PC-3 (cell line): ENCODE measurements at regions of chr3 and their contacts with region 1.

Region 1: GRCh38 chr3:146469150-146470017 is at the start of gene PLSCR2:
- DNase-seq: peak; percentile 69
- ATAC-seq: peak; percentile 70
- H3K4me3 ChIP-seq: peak within 1 kb of the TSS; percentile 61
- H3K27ac ChIP-seq: peak within 1 kb of the TSS; percentile 93
- H3K4me1 ChIP-seq: peaks cover 54% of the 10 kb centered on the region
- H3K27me3 ChIP-seq: no peaks in the 10 kb centered on the region
- CTCF ChIP-seq: no peak
- total RNA-seq, gene PLSCR2: 0.86 TPM in 1 of 2 replicates, not detected in the other

Region 2: GRCh38 chr3:145251311-145251710 is 1218.1 kb before region 1 on chr3:
- CTCF ChIA-PET with region 1: no interaction called
- POLR2A ChIA-PET with region 1: no interaction called
- intact Hi-C with region 1: no loop called
- DNase-seq: no peak
- ATAC-seq: no peak
- H3K4me3 ChIP-seq: no peak overlapping the region
- H3K27ac ChIP-seq: no peak overlapping the region
- H3K4me1 ChIP-seq: no peaks in the 10 kb centered on the region
- H3K27me3 ChIP-seq: no peaks in the 10 kb centered on the region
- CTCF ChIP-seq: no peak

Region 3: DNA sequence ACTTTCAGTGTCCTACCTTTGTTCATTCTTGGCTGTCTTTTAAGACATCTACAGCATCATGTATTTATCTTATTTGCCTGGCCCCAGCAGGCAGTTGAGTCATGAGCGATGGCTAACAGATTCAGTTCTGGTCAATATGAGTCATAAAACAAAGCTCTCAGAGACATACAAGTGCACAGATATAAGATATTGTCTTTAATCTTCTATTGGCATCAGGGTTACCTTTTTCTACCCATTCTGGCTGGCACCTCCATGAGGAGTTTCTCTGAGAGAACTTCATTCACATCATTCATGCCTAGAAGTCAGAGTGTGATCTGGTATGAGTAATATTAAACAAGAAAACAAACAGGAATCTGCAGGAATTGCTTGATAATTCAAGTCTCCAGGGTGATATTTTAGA is 47.5 kb before region 1 on chr3:
- CTCF ChIA-PET with region 1: interaction called, 4 read pairs
- POLR2A ChIA-PET with region 1: no interaction called
- intact Hi-C with region 1: loop called (anchors 2 kb)
- DNase-seq: peak; percentile 94
- ATAC-seq: peak; percentile 96
- H3K4me3 ChIP-seq: peak overlapping the region; percentile 24; the same call in 1 of the 2 replicates
- H3K27ac ChIP-seq: peak overlapping the region; percentile 89
- H3K4me1 ChIP-seq: peaks cover 30% of the 10 kb centered on the region
- H3K27me3 ChIP-seq: no peaks in the 10 kb centered on the region
- CTCF ChIP-seq: no peak

Region 4: DNA sequence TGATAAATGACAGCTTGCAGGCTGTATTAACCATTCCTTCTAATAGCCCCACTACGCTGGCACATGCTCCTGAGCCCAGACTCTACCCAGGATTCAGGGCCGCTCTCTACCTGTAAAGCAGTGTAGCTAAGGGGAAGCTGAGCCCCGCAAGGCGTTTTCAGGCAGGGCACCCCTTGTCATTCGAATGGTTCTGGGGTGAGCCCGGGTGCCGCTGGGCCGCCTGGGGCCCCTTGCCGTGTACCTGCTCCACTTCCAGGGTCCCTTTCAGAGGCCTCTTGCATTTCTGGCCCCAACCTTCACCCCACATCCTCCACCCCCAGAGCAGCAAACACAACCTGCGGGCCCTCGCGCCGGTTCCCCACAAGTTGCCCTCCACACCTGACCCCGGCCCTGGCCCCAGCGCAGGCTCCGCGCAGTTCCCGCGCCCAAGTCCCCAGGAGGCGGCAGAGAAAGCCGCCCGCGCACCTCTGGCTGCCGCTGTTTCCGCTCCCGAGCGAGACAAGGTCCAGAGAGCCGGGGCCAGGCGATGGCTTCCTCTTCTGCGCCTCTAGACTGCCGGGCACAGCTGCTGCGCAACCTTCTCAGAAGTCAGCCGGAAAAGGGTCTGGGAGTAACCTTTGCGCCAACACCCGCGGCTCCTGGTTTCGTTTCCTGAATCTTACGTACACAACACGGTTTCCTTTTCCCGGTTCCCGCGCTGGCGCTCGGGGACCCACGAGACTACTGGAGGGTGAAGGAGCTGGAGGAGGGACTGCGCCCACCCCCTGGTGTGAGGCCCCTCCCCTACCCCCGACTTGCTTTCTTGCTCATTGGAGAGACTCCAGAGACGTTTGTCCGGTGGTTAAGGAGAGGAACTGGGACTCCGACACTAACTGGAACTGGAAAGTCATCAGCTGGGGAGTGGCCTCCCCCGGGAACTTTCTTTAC is 74.9 kb after region 1 on chr3 and contains the start of gene PLSCR1:
- CTCF ChIA-PET with region 1: no interaction called
- POLR2A ChIA-PET with region 1: interaction called, 13 read pairs
- intact Hi-C with region 1: loop called (anchors 2 kb)
- DNase-seq: peak; percentile 98
- ATAC-seq: peak; percentile 84
- H3K4me3 ChIP-seq: peak within 1 kb of the TSS; percentile 92
- H3K27ac ChIP-seq: peak within 1 kb of the TSS; percentile 89
- H3K4me1 ChIP-seq: peaks cover 32% of the 10 kb centered on the region
- H3K27me3 ChIP-seq: no peaks in the 10 kb centered on the region
- CTCF ChIP-seq: no peak
- total RNA-seq, gene PLSCR1: 31.4 and 48.8 TPM in 2 replicates

Region 5: DNA sequence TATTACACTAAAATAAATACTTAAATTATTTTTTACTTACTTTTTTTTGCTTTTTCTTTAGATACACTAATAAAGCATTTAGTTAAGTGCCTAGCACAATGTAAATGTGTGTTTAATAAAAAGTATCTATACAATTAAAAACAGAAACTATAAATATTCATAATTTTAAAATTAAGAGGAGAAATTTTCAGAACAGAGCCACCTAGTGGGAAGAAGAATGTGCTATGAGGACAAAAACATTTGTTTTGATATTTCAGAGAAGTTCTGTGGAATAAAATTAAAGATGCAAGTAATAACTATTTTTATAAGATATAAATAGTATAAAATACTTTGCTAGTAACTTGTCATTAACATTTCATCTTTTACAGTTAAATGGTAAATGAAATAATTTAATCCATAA is 169.3 kb after region 1 on chr3:
- CTCF ChIA-PET with region 1: no interaction called
- POLR2A ChIA-PET with region 1: no interaction called
- intact Hi-C with region 1: no loop called
- DNase-seq: peak; percentile 36
- ATAC-seq: no peak
- H3K4me3 ChIP-seq: no peak overlapping the region
- H3K27ac ChIP-seq: no peak overlapping the region
- H3K4me1 ChIP-seq: no peaks in the 10 kb centered on the region
- H3K27me3 ChIP-seq: no peaks in the 10 kb centered on the region
- CTCF ChIP-seq: peak; percentile 38